H1 (cell line): ENCODE measurements at regions of chr1 and their contacts with region 1.

Region 1: GRCh38 chr1:25148673-25149300 is 83.5 kb downstream of the SYF2 start:
- DNase-seq: peak in 1 of 2 experiments; percentile 49
- H3K4me3 ChIP-seq: no peak overlapping the region
- H3K27ac ChIP-seq: no peak overlapping the region
- H3K4me1 ChIP-seq: peaks cover 0 to 3% (median 0%) of the 10 kb centered on the region in 4 experiments; a peak in 1 of 7 replicates
- H3K27me3 ChIP-seq: no peaks in the 10 kb centered on the region; a peak in 1 of 7 replicates
- CTCF ChIP-seq: peak in 2 of 3 experiments; percentile 63 to 74; a peak in 3 of 4 replicates
- EP300 ChIP-seq: no peak
- POLR2A ChIP-seq: no peak
- RAD21 ChIP-seq: peak; percentile 37 to 66

Region 2: DNA sequence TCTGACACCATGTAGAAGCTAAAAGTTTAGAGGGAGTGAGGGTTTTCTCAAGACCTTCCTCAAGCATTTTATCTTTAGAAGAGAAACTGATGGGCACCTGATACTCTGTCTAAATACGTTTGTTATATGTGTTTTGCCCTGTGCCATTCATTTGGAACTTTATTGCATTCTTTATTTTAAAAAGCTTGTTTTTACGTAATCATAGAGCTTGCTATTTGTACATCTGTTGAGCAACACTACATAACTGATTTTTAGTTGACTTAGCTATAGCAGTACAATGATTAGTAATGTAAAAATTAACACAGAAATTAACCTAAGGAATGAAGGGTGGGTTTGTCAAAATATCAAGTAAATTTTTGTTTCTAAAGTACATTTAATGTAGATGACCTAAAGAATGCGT is 307.2 kb before region 1 on chr1:
- CTCF ChIA-PET with region 1: no interaction called
- POLR2A ChIA-PET with region 1: no interaction called
- DNase-seq: no peak
- H3K4me3 ChIP-seq: no peak overlapping the region
- H3K27ac ChIP-seq: no peak overlapping the region
- H3K4me1 ChIP-seq: no peaks in the 10 kb centered on the region
- H3K27me3 ChIP-seq: no peaks in the 10 kb centered on the region
- CTCF ChIP-seq: no peak
- EP300 ChIP-seq: no peak
- POLR2A ChIP-seq: no peak
- RAD21 ChIP-seq: no peak

Region 3: DNA sequence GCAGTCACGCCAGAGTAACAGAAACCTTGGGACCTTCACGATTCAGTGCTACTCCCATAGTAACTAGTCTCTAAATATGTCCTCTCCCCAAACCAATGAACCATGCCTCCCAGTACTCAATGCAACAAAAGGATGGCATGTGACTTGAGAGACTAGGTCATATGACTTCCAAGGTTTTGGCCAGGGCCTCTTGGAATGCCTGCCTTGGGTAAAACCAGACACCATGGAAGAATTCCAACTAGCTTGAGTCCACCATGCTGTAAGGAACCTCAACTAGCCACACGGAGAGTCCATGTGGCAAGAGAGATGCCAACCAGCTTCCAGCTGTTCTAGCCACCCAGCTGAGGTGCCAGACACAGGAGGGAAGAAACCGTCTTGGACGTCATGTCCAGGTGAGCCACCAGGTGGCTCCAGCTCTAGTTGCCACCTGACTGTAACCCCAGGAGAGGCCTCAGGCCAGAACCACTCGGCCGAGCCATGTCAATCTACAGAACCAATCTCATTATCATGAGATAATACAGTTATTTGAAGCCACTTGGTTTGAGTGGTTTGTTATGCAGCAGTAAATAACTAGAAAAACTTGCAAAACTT is 31.5 kb before region 1 on chr1:
- CTCF ChIA-PET with region 1: interaction called, 13 read pairs
- POLR2A ChIA-PET with region 1: no interaction called
- DNase-seq: peak; percentile 38 to 77
- H3K4me3 ChIP-seq: no peak overlapping the region
- H3K27ac ChIP-seq: no peak overlapping the region
- H3K4me1 ChIP-seq: no peaks in the 10 kb centered on the region
- H3K27me3 ChIP-seq: no peaks in the 10 kb centered on the region
- CTCF ChIP-seq: peak; percentile 84 to 86 (median 86)
- EP300 ChIP-seq: no peak
- POLR2A ChIP-seq: no peak
- RAD21 ChIP-seq: peak; percentile 67 to 77

Region 4: DNA sequence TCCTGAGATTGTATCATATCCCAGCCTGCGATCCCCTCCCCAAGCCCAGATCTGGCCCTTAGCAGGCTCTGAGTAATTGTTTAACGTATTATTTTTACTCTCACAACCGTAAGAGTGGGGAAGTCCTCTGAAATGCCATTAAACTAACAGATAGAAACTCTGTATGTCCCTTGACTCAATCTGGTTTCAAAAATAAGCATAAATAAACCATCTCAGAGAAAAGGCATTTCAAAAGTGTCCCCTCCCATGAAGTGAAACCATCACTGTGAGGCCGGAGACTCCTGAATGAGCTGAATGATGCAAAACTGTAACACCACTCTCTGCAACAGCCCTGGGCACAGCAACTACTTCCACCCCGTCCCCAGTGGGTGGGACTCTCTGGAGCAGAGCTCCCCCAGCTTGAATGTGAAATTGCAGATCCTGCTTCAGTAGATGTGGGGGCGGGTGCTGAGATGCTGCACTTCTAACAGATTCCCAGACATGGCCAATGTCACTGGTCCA is 20.6 kb before region 1 on chr1:
- CTCF ChIA-PET with region 1: interaction called, 25 read pairs
- POLR2A ChIA-PET with region 1: no interaction called
- DNase-seq: no peak
- H3K4me3 ChIP-seq: no peak overlapping the region
- H3K27ac ChIP-seq: no peak overlapping the region
- H3K4me1 ChIP-seq: no peaks in the 10 kb centered on the region
- H3K27me3 ChIP-seq: no peaks in the 10 kb centered on the region
- CTCF ChIP-seq: no peak
- EP300 ChIP-seq: no peak
- POLR2A ChIP-seq: no peak
- RAD21 ChIP-seq: no peak

Region 5: GRCh38 chr1:25163986-25164385 is 15.2 kb after region 1 on chr1:
- CTCF ChIA-PET with region 1: interaction called, 13 read pairs
- POLR2A ChIA-PET with region 1: no interaction called
- DNase-seq: no peak
- H3K4me3 ChIP-seq: no peak overlapping the region
- H3K27ac ChIP-seq: no peak overlapping the region
- H3K4me1 ChIP-seq: peaks cover 0 to 4% (median 0%) of the 10 kb centered on the region in 4 experiments; a peak in 2 of 7 replicates
- H3K27me3 ChIP-seq: no peaks in the 10 kb centered on the region
- CTCF ChIP-seq: no peak
- EP300 ChIP-seq: no peak
- POLR2A ChIP-seq: no peak
- RAD21 ChIP-seq: no peak

Region 6: GRCh38 chr1:25204797-25205480 is 56.2 kb after region 1 on chr1:
- CTCF ChIA-PET with region 1: interaction called, 11 read pairs
- POLR2A ChIA-PET with region 1: no interaction called
- DNase-seq: no peak
- H3K4me3 ChIP-seq: no peak overlapping the region
- H3K27ac ChIP-seq: no peak overlapping the region
- H3K4me1 ChIP-seq: no peaks in the 10 kb centered on the region; a peak in 1 of 7 replicates
- H3K27me3 ChIP-seq: no peaks in the 10 kb centered on the region
- CTCF ChIP-seq: peak in 2 of 3 experiments; percentile 58 to 63; a peak in 3 of 4 replicates
- EP300 ChIP-seq: no peak
- POLR2A ChIP-seq: no peak
- RAD21 ChIP-seq: peak; percentile 75 to 79